ENCODE measurements at regions of chr11 and their contacts with region 1.

Region 1: GRCh38 chr11:61792310-61793085 is at the starts of genes FEN1 and TMEM258:
- DNase-seq: peak; percentile 87 to 93
- ATAC-seq: peak; percentile 83 to 92 (median 88)
- H3K4me3 ChIP-seq: peak within 1 kb of the TSS; percentile 64
- H3K4me3 Mint-ChIP-seq: peak within 1 kb of the TSS; percentile 96
- H3K27ac ChIP-seq: peak within 1 kb of the TSS; percentile 89
- H3K27ac Mint-ChIP-seq: peak within 1 kb of the TSS; percentile 98 to 99
- H3K4me1 ChIP-seq: peaks cover 20% of the 10 kb centered on the region
- H3K4me1 Mint-ChIP-seq: peaks cover 17 to 43% of the 10 kb centered on the region in 2 donors
- H3K27me3 ChIP-seq: no peaks in the 10 kb centered on the region
- H3K27me3 Mint-ChIP-seq: no peaks in the 10 kb centered on the region
- CTCF ChIP-seq: no peak
- total RNA-seq, gene FEN1: 14.2 to 17.8 (median 17.5) TPM
- total RNA-seq, gene TMEM258: 64.4 to 69.3 (median 66.1) TPM

Region 2: DNA sequence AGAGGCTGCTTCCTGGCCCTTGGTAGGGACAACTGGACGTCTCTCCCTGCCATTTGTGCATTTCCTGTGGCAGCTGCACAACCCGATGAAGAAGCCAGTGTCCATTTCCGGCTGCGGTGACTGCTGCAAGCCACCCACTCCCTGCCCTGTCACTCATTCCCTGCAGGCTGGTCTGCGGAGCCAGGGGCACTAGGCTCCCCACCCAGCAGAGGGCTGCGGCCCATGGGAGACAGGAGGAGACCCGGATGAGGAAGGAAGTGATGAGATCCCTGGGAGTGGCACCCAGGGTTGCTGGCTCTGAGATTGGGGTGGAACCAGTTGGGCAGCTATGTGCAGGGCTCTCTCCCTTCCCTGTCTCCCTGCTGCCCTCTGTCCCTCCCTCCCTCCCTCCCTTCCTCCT is 50.1 kb before region 1 on chr11:
- intact Hi-C with region 1: no loop called
- DNase-seq: no peak
- ATAC-seq: no peak
- H3K4me3 ChIP-seq: no peak overlapping the region
- H3K4me3 Mint-ChIP-seq: no peak overlapping the region
- H3K27ac ChIP-seq: no peak overlapping the region
- H3K27ac Mint-ChIP-seq: no peak overlapping the region
- H3K4me1 ChIP-seq: no peaks in the 10 kb centered on the region
- H3K4me1 Mint-ChIP-seq: no peaks in the 10 kb centered on the region
- H3K27me3 ChIP-seq: no peaks in the 10 kb centered on the region
- H3K27me3 Mint-ChIP-seq: no peaks in the 10 kb centered on the region
- CTCF ChIP-seq: no peak

Region 3: GRCh38 chr11:61814958-61815789 is 22.7 kb after region 1 on chr11:
- intact Hi-C with region 1: loop called (anchors 1 kb)
- DNase-seq: peak; percentile 37 to 59
- ATAC-seq: peak; percentile 48 to 78 (median 54)
- H3K4me3 ChIP-seq: peak overlapping the region; percentile 82
- H3K4me3 Mint-ChIP-seq: peak overlapping the region; percentile 91
- H3K27ac ChIP-seq: peak overlapping the region; percentile 60
- H3K27ac Mint-ChIP-seq: peak overlapping the region; percentile 84 to 92
- H3K4me1 ChIP-seq: peaks cover 28% of the 10 kb centered on the region
- H3K4me1 Mint-ChIP-seq: peaks cover 17 to 37% of the 10 kb centered on the region in 2 donors
- H3K27me3 ChIP-seq: no peaks in the 10 kb centered on the region
- H3K27me3 Mint-ChIP-seq: no peaks in the 10 kb centered on the region
- CTCF ChIP-seq: no peak

Region 4: GRCh38 chr11:61834278-61835048 is 42.0 kb after region 1 on chr11:
- intact Hi-C with region 1: loop called (anchors 2 kb)
- DNase-seq: peak; percentile 69 to 76
- ATAC-seq: peak; percentile 98 to 99 (median 98)
- H3K4me3 ChIP-seq: no peak overlapping the region
- H3K4me3 Mint-ChIP-seq: peak overlapping the region; percentile 81
- H3K27ac ChIP-seq: peak overlapping the region; percentile 83
- H3K27ac Mint-ChIP-seq: peak overlapping the region; percentile 97 to 98
- H3K4me1 ChIP-seq: peaks cover 31% of the 10 kb centered on the region
- H3K4me1 Mint-ChIP-seq: peaks cover 64 to 66% of the 10 kb centered on the region in 2 donors
- H3K27me3 ChIP-seq: no peaks in the 10 kb centered on the region
- H3K27me3 Mint-ChIP-seq: no peaks in the 10 kb centered on the region
- CTCF ChIP-seq: no peak

Region 5: GRCh38 chr11:61947486-61948210 is 155.2 kb after region 1 on chr11:
- intact Hi-C with region 1: loop called (anchors 1 kb)
- DNase-seq: peak; percentile 54 to 82
- ATAC-seq: peak; percentile 86 to 99 (median 93)
- H3K4me3 ChIP-seq: no peak overlapping the region
- H3K4me3 Mint-ChIP-seq: no peak overlapping the region
- H3K27ac ChIP-seq: no peak overlapping the region
- H3K27ac Mint-ChIP-seq: no peak overlapping the region
- H3K4me1 ChIP-seq: peaks cover 2% of the 10 kb centered on the region
- H3K4me1 Mint-ChIP-seq: no peaks in the 10 kb centered on the region
- H3K27me3 ChIP-seq: no peaks in the 10 kb centered on the region
- H3K27me3 Mint-ChIP-seq: no peaks in the 10 kb centered on the region
- CTCF ChIP-seq: peak; percentile 85

Region 6: GRCh38 chr11:61963282-61964057 is 171.0 kb after region 1 on chr11:
- intact Hi-C with region 1: no loop called
- DNase-seq: peak in 1 of 2 donors; percentile 60
- ATAC-seq: peak in 2 of 3 donors; percentile 1 to 41
- H3K4me3 ChIP-seq: no peak overlapping the region
- H3K4me3 Mint-ChIP-seq: peak overlapping the region; percentile 49
- H3K27ac ChIP-seq: peak overlapping the region; percentile 68
- H3K27ac Mint-ChIP-seq: peak overlapping the region; percentile 86 to 93
- H3K4me1 ChIP-seq: peaks cover 42% of the 10 kb centered on the region
- H3K4me1 Mint-ChIP-seq: peaks cover 38 to 44% of the 10 kb centered on the region in 2 donors
- H3K27me3 ChIP-seq: no peaks in the 10 kb centered on the region
- H3K27me3 Mint-ChIP-seq: no peaks in the 10 kb centered on the region
- CTCF ChIP-seq: no peak

Region 7: GRCh38 chr11:62033191-62034044 is 240.9 kb after region 1 on chr11:
- intact Hi-C with region 1: no loop called
- DNase-seq: no peak
- ATAC-seq: peak; percentile 29 to 82 (median 62)
- H3K4me3 ChIP-seq: no peak overlapping the region
- H3K4me3 Mint-ChIP-seq: no peak overlapping the region
- H3K27ac ChIP-seq: no peak overlapping the region
- H3K27ac Mint-ChIP-seq: peak overlapping the region in 1 of 2 donors; percentile 49
- H3K4me1 ChIP-seq: no peaks in the 10 kb centered on the region
- H3K4me1 Mint-ChIP-seq: peaks cover 0 to 6% of the 10 kb centered on the region in 2 donors
- H3K27me3 ChIP-seq: no peaks in the 10 kb centered on the region
- H3K27me3 Mint-ChIP-seq: peaks cover 0 to 3% of the 10 kb centered on the region in 2 donors
- CTCF ChIP-seq: no peak

Region 8: DNA sequence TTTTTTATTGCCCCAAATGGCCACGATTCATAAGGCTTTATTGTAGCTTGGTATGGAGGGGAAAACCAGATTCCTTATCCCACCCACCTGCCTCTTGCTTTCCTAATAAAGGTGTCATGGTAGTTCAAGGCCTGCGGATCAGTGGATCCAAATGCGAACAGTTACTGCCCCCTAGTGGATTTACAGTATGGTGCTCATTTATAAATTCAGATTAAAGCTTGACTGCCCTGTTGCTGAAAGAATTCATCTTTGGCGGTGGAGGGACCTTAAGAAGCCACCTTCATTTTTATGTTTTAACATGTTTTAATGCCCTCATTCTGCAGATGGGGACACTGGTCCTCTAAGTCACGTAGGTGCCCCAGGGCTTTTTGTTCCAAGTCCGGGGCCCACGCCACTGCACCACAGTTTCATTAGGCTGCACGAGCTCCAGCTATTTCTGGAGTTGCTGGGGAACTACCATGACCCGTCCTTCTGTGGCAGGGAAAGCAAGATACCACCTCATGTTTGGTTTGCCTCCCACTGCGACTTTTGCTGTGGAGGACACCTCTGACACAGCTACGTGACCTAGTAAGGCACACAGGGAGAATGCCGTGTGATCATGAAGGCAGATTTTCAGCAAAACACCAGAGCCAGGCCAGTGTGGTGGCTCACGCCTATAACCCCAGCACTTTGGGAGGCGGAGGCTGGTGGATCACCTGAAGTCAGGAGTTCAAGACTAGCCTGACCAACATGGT is 315.7 kb after region 1 on chr11:
- intact Hi-C with region 1: loop called (anchors 1 kb)
- DNase-seq: peak in 1 of 2 donors; percentile 83
- ATAC-seq: peak; percentile 60 to 66 (median 63)
- H3K4me3 ChIP-seq: no peak overlapping the region
- H3K4me3 Mint-ChIP-seq: no peak overlapping the region
- H3K27ac ChIP-seq: no peak overlapping the region
- H3K27ac Mint-ChIP-seq: no peak overlapping the region
- H3K4me1 ChIP-seq: peaks cover 22% of the 10 kb centered on the region
- H3K4me1 Mint-ChIP-seq: peaks cover 8 to 16% of the 10 kb centered on the region in 2 donors
- H3K27me3 ChIP-seq: no peaks in the 10 kb centered on the region
- H3K27me3 Mint-ChIP-seq: peaks cover 0 to 2% of the 10 kb centered on the region in 2 donors
- CTCF ChIP-seq: peak; percentile 75

Measured in natural killer cell (primary cell).